ENCODE measurements at regions of chr5 and their contacts with region 1.

Region 1: DNA sequence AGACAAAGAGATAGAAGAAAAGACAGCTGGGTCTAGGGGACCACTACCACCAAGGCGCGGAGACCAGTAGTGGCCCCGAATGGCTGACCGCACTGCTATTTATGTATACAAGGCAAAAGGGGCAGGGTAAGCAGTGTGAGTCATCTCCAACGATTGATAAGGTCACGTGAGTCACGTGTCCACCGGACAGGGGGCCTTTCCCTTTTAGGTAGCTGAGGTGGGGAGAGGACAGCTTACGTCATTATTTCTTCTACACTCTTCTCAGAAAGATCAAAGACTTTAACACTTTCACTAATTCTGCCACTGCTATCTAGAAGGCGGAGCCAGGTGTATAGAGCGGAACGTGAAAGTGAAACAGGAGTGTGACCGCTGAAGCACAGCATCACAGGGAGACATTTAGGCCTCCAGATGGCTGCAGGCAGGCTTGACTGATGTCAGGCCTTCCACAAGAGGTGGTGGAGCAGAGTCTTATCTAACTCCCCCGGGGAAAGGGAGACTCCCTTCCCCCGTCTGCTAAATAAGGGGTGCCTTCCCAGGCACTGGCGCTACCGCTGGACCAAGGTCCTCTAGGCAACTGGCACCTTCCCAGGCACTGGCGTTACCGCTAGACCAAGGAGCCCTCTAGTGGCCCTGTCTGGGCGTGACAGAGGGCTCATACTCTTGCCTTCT is 6.1 kb upstream of the PRR16 start:
- DNase-seq: peak; percentile 92
- H3K4me3 Mint-ChIP-seq: peak overlapping the region; percentile 70
- H3K27ac Mint-ChIP-seq: peak overlapping the region; percentile 75
- H3K4me1 Mint-ChIP-seq: peaks cover 23% of the 10 kb centered on the region
- H3K27me3 Mint-ChIP-seq: no peaks in the 10 kb centered on the region
- CTCF ChIP-seq: peak; percentile 98

Region 2: GRCh38 chr5:119943148-119943547 is 514.8 kb before region 1 on chr5:
- CTCF ChIA-PET with region 1: interaction called, 37 read pairs
- POLR2A ChIA-PET with region 1: no interaction called
- intact Hi-C with region 1: loop called (anchors 1 kb)
- DNase-seq: peak; percentile 33
- H3K4me3 Mint-ChIP-seq: no peak overlapping the region
- H3K27ac Mint-ChIP-seq: no peak overlapping the region
- H3K4me1 Mint-ChIP-seq: peaks cover 11% of the 10 kb centered on the region
- H3K27me3 Mint-ChIP-seq: no peaks in the 10 kb centered on the region
- CTCF ChIP-seq: peak; percentile 34

Region 3: GRCh38 chr5:120055858-120056257 is 402.1 kb before region 1 on chr5:
- CTCF ChIA-PET with region 1: interaction called, 68 read pairs
- POLR2A ChIA-PET with region 1: interaction called, 3 read pairs
- intact Hi-C with region 1: loop called (anchors 1 kb)
- DNase-seq: peak; percentile 65
- H3K4me3 Mint-ChIP-seq: no peak overlapping the region
- H3K27ac Mint-ChIP-seq: no peak overlapping the region
- H3K4me1 Mint-ChIP-seq: no peaks in the 10 kb centered on the region
- H3K27me3 Mint-ChIP-seq: no peaks in the 10 kb centered on the region
- CTCF ChIP-seq: peak; percentile 43

Region 4: DNA sequence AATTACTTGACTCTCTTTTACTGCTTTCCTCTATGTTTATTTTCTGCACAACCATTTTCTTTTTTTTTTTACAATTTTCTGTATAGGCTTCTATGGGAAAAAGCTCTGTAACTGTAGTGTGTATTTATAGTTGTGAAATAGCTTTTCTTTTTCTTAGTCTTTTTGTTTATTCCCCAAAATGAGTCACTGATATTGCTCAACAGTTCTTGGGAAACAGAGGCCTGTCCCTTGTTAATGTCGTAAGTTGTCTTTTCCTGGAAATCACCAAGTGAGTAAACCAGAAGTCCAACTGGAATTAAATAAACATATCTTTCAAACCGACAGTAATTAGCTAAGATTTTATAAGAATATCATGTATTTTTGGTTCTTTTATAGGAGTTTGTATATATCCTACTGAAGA is 318.9 kb before region 1 on chr5:
- CTCF ChIA-PET with region 1: interaction called, 4 read pairs
- POLR2A ChIA-PET with region 1: interaction called, 6 read pairs
- intact Hi-C with region 1: loop called (anchors 1 kb)
- DNase-seq: peak; percentile 100
- H3K4me3 Mint-ChIP-seq: no peak overlapping the region
- H3K27ac Mint-ChIP-seq: peak overlapping the region; percentile 96
- H3K4me1 Mint-ChIP-seq: peaks cover 34% of the 10 kb centered on the region
- H3K27me3 Mint-ChIP-seq: no peaks in the 10 kb centered on the region
- CTCF ChIP-seq: no peak

Region 5: DNA sequence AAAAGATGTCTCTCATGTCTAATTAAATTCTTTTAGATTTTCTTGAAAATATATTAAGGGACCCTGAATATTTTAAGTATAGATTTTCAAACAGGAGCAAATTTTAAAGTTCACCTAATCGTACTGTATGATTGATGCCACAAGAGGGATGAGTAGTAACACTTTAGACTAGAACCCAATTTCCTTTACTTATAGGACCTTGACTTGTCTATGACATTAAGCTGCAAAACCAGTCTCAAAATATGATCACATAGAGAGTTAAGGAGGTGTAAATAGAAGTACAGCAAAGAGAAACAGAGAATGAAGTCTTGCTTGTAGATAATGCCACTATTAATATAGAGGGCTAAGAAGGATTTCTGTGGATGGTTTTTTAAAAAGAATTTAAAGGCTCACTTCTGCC is 306.8 kb before region 1 on chr5:
- CTCF ChIA-PET with region 1: no interaction called
- POLR2A ChIA-PET with region 1: no interaction called
- intact Hi-C with region 1: loop called (anchors 2 kb)
- DNase-seq: no peak
- H3K4me3 Mint-ChIP-seq: no peak overlapping the region
- H3K27ac Mint-ChIP-seq: peak overlapping the region; percentile 96
- H3K4me1 Mint-ChIP-seq: peaks cover 27% of the 10 kb centered on the region
- H3K27me3 Mint-ChIP-seq: no peaks in the 10 kb centered on the region
- CTCF ChIP-seq: no peak

Region 6: GRCh38 chr5:120446068-120446492 is 11.9 kb before region 1 on chr5:
- CTCF ChIA-PET with region 1: interaction called, 23 read pairs
- POLR2A ChIA-PET with region 1: interaction called, 6 read pairs
- intact Hi-C with region 1: no loop called
- DNase-seq: peak; percentile 86
- H3K4me3 Mint-ChIP-seq: peak overlapping the region; percentile 44
- H3K27ac Mint-ChIP-seq: peak overlapping the region; percentile 97
- H3K4me1 Mint-ChIP-seq: peaks cover 26% of the 10 kb centered on the region
- H3K27me3 Mint-ChIP-seq: no peaks in the 10 kb centered on the region
- CTCF ChIP-seq: no peak

Region 7: DNA sequence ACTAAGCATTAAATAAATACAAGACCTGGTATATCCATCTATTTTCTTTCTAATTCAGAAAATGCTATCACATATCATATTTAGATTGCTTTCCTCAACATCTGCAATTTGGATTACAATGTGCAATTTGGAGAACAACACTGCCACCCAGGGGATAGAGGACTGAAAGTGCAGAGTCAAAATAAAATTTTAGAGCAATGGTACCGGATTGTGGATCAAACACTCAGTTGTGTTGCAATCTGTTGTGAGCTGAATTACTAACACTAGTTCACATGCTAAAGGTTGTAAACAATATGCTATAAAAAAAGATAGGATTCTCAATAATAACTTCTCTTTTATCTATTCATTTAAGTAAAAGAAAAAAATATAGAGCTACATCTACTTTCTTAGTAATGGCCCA is 1491.9 kb after region 1 on chr5:
- CTCF ChIA-PET with region 1: interaction called, 5 read pairs
- POLR2A ChIA-PET with region 1: no interaction called
- intact Hi-C with region 1: loop called (anchors 5 kb)
- DNase-seq: peak; percentile 82
- H3K4me3 Mint-ChIP-seq: no peak overlapping the region
- H3K27ac Mint-ChIP-seq: no peak overlapping the region
- H3K4me1 Mint-ChIP-seq: no peaks in the 10 kb centered on the region
- H3K27me3 Mint-ChIP-seq: no peaks in the 10 kb centered on the region
- CTCF ChIP-seq: peak; percentile 85

Measured in MCF 10A (cell line).